Pancreas (tissue), 10 donors: ENCODE measurements at regions of chr11 and their contacts with region 1.

Region 1: GRCh38 chr11:111707039-111707690 is 59.0 kb downstream of the PPP2R1B start:
- DNase-seq: peak in 4 of 6 donors; percentile 46 to 70 (median 66)
- ATAC-seq: peak; percentile 86 to 89 (median 87)
- H3K4me3 ChIP-seq: no peak overlapping the region
- H3K27ac ChIP-seq: peak overlapping the region; percentile 20 to 70 (median 49)
- H3K4me1 ChIP-seq: peaks cover 23 to 27% (median 26%) of the 10 kb centered on the region in 3 donors
- H3K27me3 ChIP-seq: no peaks in the 10 kb centered on the region
- CTCF ChIP-seq: no peak

Region 2: GRCh38 chr11:111623527-111624030 is 83.6 kb before region 1 on chr11:
- intact Hi-C with region 1: loop called in 1 of 3 experiments (anchors 10 kb)
- DNase-seq: peak in 2 of 6 donors; percentile 25 to 45
- ATAC-seq: peak; percentile 71 to 90 (median 84)
- H3K4me3 ChIP-seq: no peak overlapping the region
- H3K27ac ChIP-seq: no peak overlapping the region
- H3K4me1 ChIP-seq: peaks cover 13 to 29% (median 18%) of the 10 kb centered on the region in 3 donors
- H3K27me3 ChIP-seq: no peaks in the 10 kb centered on the region
- CTCF ChIP-seq: no peak